ENCODE measurements at regions of chr3 and their contacts with region 1.

Region 1: GRCh38 chr3:62833531-62833930 is 41.7 kb downstream of the CADPS start:
- DNase-seq: no peak
- ATAC-seq: no peak

Region 2: DNA sequence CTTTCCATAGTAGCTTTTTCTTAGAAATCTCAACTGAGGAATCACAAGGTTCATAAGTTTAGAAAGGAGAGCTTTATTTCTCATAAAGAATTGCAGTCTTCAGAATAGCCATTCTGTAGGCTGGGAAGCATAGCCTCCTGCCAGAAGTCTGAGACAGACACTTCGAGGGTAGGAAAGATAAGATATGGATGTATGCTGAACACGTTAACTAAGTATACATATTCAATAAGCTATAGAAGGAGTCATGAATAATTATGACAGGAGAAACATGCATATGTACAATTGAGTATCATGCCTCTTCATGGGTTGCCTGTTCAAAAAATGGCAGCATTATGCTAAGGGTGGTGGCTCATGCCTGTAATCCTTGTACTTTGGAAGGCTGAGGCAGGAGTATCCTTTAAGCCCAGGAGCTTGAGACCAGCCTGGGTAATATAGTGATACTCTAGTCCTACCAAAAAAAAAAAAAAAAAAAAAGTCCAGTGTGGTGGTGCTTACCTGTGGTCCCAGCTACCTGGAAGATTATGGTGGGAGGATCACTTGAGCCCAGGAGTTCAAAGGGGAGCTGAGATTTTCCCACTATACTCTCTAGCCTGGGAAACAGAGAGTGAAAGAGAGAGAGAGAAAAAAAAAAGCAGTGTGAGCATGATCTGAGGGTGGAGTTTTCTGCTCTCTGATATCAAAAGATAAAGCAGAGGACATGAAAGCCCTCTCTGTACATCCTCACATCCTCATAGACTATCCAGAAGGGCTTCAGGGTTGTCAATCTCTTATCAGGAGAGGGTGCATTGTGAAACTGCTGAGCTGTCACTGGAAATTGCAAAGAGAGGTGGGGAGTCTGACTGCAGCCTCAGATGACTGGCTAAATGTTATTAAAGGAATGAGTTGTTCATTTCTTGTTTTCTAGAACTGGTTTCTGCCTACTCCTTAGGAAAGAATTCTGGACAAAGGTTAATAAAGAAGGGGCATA is 65.3 kb after region 1 on chr3:
- intact Hi-C with region 1: no loop called
- DNase-seq: no peak
- ATAC-seq: no peak

Region 3: GRCh38 chr3:62922086-62922725 is 88.7 kb after region 1 on chr3:
- intact Hi-C with region 1: loop called (anchors 10 kb)
- DNase-seq: no peak
- ATAC-seq: no peak

Region 4: GRCh38 chr3:63193629-63194028 is 360.1 kb after region 1 on chr3:
- intact Hi-C with region 1: loop called (anchors 10 kb)
- DNase-seq: no peak
- ATAC-seq: no peak